PC-9 (cell line): ENCODE measurements at regions of chr1 and their contacts with region 1.

Region 1: DNA sequence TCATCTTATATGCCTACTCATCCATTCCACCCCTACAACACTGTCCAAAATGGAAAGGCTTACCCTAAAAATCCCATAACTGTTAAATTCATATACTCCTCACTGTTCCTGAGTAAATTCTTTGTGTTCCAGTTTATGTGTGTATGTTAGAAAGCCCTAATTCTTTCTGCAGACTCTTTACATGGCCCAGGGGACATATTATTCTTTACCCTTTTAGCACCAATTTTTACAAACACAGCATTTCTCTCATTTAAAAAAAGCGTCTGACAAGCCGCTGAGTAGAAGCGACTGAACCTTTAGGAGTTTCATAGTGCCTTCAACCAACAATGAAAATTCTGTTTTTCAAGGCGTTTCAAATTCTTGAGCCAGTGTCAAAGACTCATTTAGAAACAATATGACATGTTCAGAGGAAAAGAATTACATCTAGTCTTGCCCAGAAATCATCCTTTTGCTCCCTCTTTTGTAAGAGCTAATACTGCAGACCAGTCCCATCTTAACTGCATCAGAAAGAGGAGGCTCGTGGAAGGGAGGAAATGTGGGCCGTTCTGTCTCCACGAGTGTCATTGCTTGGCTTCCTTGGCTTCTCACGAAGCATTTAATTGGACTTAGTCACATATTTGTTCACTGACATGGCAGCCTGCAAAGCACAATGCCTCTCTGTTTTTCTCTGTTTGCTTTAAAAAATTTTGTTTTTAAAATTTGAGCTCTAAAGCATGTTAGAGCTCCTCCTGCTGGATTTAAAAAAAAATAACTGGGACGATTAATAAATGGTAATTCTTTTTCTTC is 21.3 kb upstream of the C1orf105 start:
- DNase-seq: peak; percentile 43 to 72
- H3K4me3 ChIP-seq: no peak overlapping the region
- H3K27ac ChIP-seq: no peak overlapping the region
- H3K4me1 ChIP-seq: no peaks in the 10 kb centered on the region
- H3K27me3 ChIP-seq: no peaks in the 10 kb centered on the region
- CTCF ChIP-seq: peak; percentile 84

Region 2: DNA sequence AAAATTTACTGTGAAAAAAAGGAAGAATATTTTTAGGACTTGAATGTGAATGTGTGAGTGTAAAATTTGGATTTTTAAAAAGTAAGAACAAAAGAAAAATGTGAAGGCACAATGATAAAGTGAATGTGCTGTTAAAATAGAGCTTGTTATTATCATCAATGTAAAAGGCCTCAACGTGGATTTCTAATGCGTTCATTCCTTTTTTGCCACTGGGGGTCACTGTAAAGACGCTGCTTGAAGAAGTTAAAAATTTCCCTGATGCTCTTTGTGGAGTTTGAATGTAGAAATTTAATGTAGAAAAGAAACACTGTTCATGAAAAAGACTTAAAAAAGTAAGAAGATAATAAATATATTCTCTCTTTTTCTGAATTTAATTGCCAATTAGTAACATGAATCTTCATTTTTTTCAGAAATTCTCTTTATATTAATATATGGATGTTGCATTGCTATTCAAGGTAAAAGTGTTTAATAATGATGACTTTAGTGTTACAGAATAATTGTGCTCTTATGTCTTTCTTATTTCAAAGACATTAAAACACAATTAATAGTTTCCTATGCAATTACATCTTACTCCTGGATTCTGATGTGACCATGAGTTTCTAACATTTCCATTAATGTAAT is 396.3 kb before region 1 on chr1:
- CTCF ChIA-PET with region 1: interaction called, 8 read pairs
- POLR2A ChIA-PET with region 1: no interaction called
- intact Hi-C with region 1: loop called (anchors 1 kb)
- DNase-seq: peak; percentile 23 to 38
- H3K4me3 ChIP-seq: no peak overlapping the region
- H3K27ac ChIP-seq: no peak overlapping the region
- H3K4me1 ChIP-seq: no peaks in the 10 kb centered on the region
- H3K27me3 ChIP-seq: no peaks in the 10 kb centered on the region
- CTCF ChIP-seq: peak; percentile 75

Region 3: GRCh38 chr1:172089768-172090510 is 309.2 kb before region 1 on chr1:
- CTCF ChIA-PET with region 1: no interaction called
- POLR2A ChIA-PET with region 1: no interaction called
- intact Hi-C with region 1: loop called (anchors 5 kb)
- DNase-seq: peak in 1 of 2 experiments; percentile 3
- H3K4me3 ChIP-seq: no peak overlapping the region
- H3K27ac ChIP-seq: no peak overlapping the region
- H3K4me1 ChIP-seq: no peaks in the 10 kb centered on the region
- H3K27me3 ChIP-seq: no peaks in the 10 kb centered on the region
- CTCF ChIP-seq: peak; percentile 49

Region 4: DNA sequence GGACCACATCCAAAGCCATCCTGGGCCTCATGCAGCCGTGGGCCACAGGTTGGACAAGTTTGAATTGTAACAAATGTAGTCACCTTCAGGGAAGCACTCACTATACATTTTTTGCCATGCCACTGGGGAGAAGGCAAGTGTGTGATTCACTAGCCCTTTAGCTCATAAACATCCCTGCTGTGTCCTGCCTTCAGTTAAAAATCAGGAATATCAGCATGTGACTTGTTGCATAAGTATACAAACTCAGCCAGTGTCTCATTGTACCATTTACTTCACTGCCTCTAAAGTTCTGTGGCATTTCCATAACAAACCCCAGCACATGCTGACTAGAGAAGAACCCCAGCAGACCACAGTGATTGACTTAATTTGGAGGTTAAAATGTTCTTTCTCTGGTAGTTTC is 120.7 kb before region 1 on chr1:
- CTCF ChIA-PET with region 1: no interaction called
- POLR2A ChIA-PET with region 1: no interaction called
- intact Hi-C with region 1: no loop called
- DNase-seq: peak in 1 of 2 experiments; percentile 55
- H3K4me3 ChIP-seq: no peak overlapping the region
- H3K27ac ChIP-seq: no peak overlapping the region
- H3K4me1 ChIP-seq: peaks cover 8% of the 10 kb centered on the region; the same call in 1 of the 2 replicates
- H3K27me3 ChIP-seq: no peaks in the 10 kb centered on the region
- CTCF ChIP-seq: no peak

Region 5: GRCh38 chr1:172322219-172323061 is 76.7 kb before region 1 on chr1:
- CTCF ChIA-PET with region 1: no interaction called
- POLR2A ChIA-PET with region 1: no interaction called
- intact Hi-C with region 1: loop called (anchors 1 kb)
- DNase-seq: peak in 1 of 2 experiments; percentile 45
- H3K4me3 ChIP-seq: no peak overlapping the region
- H3K27ac ChIP-seq: no peak overlapping the region
- H3K4me1 ChIP-seq: peaks cover 9% of the 10 kb centered on the region
- H3K27me3 ChIP-seq: no peaks in the 10 kb centered on the region
- CTCF ChIP-seq: no peak

Region 6: GRCh38 chr1:172443626-172444453 is 44.7 kb after region 1 on chr1 and contains the start of gene PIGC:
- CTCF ChIA-PET with region 1: no interaction called
- POLR2A ChIA-PET with region 1: no interaction called
- intact Hi-C with region 1: loop called (anchors 1 kb)
- DNase-seq: peak; percentile 66 to 85
- H3K4me3 ChIP-seq: peak within 1 kb of the TSS; percentile 76
- H3K27ac ChIP-seq: no peak within 1 kb of the TSS
- H3K4me1 ChIP-seq: peaks cover 29% of the 10 kb centered on the region
- H3K27me3 ChIP-seq: no peaks in the 10 kb centered on the region
- CTCF ChIP-seq: peak; percentile 89
- total RNA-seq, gene PIGC: 21.3 and 26.5 TPM in 2 replicates

Region 7: GRCh38 chr1:172582893-172583292 is 183.7 kb after region 1 on chr1:
- CTCF ChIA-PET with region 1: no interaction called
- POLR2A ChIA-PET with region 1: no interaction called
- intact Hi-C with region 1: no loop called
- DNase-seq: no peak
- H3K4me3 ChIP-seq: no peak overlapping the region
- H3K27ac ChIP-seq: no peak overlapping the region
- H3K4me1 ChIP-seq: peaks cover 19% of the 10 kb centered on the region
- H3K27me3 ChIP-seq: no peaks in the 10 kb centered on the region
- CTCF ChIP-seq: peak; percentile 51; the same call in 1 of the 2 replicates